Activated CD8-positive, alpha-beta T cell treated with anti-CD3 and anti-CD28 coated beads, Interleukin-2, amount 10 ng/mL, durations not matched to agents 7 days and 5 days (primary cell): ENCODE measurements at regions of chr3 and their contacts with region 1.

Region 1: DNA sequence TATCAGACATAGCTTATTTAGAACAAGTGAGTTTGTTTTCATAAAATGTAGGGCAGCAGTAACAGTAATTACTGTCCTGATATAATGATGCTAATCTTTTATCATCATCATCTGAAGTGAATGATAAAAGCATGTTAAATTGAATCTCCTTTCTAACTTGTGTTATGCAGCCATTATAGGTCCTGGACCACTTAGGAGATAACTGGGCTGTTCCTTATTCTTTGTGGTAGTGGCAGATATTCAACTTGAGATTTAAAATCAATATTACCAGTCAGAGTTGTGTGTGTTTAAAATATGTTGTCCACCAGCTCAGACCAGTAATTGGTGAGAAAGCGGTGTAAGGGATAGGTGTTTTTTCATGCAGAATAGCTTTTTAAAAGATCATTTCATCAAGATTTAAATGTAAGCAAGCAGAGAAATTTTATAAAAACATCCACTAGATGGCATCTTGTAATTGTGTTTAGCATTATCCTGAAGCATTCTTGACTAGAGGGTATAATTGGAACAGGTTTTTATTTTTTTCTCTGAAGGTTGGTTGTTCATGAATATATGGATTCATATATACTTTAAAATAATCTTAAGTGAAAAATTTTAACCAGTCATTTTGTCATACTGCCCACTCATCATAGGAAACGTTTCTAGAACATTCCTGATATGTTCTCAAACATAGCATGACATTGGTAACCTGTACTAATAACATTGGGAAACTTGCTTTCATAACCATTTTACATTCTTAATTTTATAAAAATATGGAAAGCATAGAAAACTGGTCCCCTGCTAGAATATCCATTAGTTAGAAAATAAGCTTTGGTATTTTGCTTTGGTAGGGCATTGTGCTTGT is 153.9 kb downstream of the BBX start:
- DNase-seq: no peak
- ATAC-seq: no peak
- H3K4me3 Mint-ChIP-seq: no peak overlapping the region
- H3K27ac Mint-ChIP-seq: no peak overlapping the region
- H3K4me1 Mint-ChIP-seq: peaks cover 4% of the 10 kb centered on the region
- H3K27me3 Mint-ChIP-seq: no peaks in the 10 kb centered on the region

Region 2: GRCh38 chr3:107574650-107575049 is 102.0 kb before region 1 on chr3:
- CTCF ChIA-PET with region 1: interaction called, 24 read pairs
- POLR2A ChIA-PET with region 1: no interaction called
- DNase-seq: no peak
- ATAC-seq: no peak
- H3K4me3 Mint-ChIP-seq: no peak overlapping the region
- H3K27ac Mint-ChIP-seq: no peak overlapping the region
- H3K4me1 Mint-ChIP-seq: peaks cover 6% of the 10 kb centered on the region
- H3K27me3 Mint-ChIP-seq: no peaks in the 10 kb centered on the region

Region 3: GRCh38 chr3:107660306-107660976 is 16.2 kb before region 1 on chr3:
- CTCF ChIA-PET with region 1: interaction called, 68 read pairs
- POLR2A ChIA-PET with region 1: no interaction called
- DNase-seq: no peak
- ATAC-seq: no peak
- H3K4me3 Mint-ChIP-seq: no peak overlapping the region
- H3K27ac Mint-ChIP-seq: no peak overlapping the region
- H3K4me1 Mint-ChIP-seq: peaks cover 11% of the 10 kb centered on the region
- H3K27me3 Mint-ChIP-seq: no peaks in the 10 kb centered on the region

Region 4: DNA sequence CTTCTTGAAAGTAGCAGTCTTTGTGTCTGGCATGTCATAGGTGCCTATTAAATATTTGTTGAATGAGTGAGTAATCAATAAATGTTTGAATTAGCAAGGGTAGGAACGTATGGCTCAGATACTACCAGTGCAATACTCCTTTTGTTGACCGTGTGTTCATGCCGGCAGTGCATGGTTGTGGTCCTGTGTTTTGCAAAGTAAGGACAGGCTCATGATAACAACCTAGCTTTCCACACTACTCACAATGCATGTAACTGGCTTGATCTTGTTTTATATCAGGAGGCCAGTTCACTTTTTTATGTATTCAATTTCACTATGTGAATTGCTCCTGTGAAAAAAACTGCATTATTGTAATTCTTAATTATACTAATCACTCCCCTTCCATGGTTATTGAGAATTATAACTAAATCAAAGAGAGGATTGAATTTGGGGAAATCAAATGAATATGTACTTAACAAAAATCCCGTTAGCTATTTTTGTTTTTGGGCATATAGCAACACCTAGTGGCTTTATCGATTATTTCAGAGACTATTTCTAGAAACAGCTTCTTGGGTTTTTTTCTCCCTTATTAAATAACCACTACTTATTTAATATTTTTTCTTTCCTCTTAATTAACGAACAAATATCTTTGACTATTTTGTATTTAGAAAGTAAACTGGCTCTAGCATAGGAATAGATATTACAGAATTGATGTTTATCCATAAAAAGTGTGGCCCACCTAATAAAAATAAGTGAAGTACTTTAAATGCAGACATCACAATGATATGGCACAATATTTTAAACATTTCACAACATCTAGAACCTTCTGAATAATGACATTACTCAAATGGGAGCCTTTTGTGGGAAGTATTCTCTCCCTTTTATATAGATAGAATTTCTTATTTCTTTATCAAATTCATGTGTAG is 64.6 kb after region 1 on chr3:
- CTCF ChIA-PET with region 1: interaction called, 57 read pairs
- POLR2A ChIA-PET with region 1: interaction called, 3 read pairs
- DNase-seq: no peak
- ATAC-seq: no peak
- H3K4me3 Mint-ChIP-seq: no peak overlapping the region
- H3K27ac Mint-ChIP-seq: no peak overlapping the region
- H3K4me1 Mint-ChIP-seq: no peaks in the 10 kb centered on the region
- H3K27me3 Mint-ChIP-seq: no peaks in the 10 kb centered on the region

Region 5: DNA sequence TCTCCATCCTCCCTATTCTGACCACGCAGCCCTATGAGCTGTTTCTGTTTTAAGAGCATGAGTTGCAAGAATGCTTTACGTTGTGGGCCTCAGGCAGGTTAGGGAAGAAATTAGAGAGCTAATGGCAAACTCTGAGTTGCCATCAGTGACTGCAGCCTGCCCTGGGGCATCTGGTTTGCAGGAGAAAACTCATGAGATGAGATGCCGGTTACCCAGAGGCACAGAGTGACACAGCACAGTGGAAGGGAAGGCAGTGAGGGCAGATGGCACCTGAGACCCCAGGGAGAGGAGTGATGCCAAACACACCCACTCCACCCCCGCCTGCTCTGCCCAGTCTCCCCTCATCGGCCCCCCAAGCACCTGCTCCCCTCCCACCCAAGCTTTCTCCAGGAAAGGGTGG is 148.9 kb after region 1 on chr3:
- CTCF ChIA-PET with region 1: no interaction called
- POLR2A ChIA-PET with region 1: no interaction called
- DNase-seq: no peak
- ATAC-seq: no peak
- H3K4me3 Mint-ChIP-seq: no peak overlapping the region
- H3K27ac Mint-ChIP-seq: no peak overlapping the region
- H3K4me1 Mint-ChIP-seq: no peaks in the 10 kb centered on the region
- H3K27me3 Mint-ChIP-seq: peaks cover 6% of the 10 kb centered on the region

Region 6: DNA sequence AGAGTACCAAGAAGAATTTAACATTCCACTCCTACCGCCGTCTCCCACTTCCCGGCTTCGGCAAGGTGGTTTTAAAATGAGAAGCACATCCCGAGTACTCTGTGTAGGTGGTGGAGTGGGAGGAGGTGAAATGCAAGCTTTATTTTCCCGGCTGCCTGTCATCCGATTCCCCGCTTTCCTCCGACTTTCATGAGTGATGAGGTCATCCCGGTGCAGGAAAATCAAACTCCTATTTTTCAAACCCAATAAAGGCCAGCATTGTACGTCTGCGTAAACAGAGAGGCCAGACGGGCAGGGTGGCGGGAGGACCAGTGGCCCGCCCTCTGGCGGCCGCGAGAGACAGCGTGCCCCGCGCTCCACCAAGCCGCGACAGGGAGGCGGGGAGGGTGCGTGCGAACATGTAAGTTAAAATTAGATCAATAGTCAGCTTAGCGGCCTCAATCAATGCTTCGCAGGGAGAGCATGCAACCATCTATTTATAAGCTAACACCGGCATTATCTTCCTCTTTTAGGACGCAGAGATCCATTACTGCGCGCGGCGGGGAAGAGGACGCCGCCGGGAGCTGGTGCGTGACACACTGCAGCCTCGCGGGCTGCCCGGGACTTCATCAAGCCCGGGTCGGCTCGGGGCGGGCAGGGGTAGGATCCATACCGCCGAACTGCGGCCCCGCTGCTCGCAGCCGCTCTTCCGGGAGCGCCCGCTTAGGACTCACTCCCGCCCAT is 250.8 kb after region 1 on chr3:
- CTCF ChIA-PET with region 1: interaction called, 23 read pairs
- POLR2A ChIA-PET with region 1: no interaction called
- DNase-seq: peak; percentile 77
- ATAC-seq: peak; percentile 99
- H3K4me3 Mint-ChIP-seq: peak overlapping the region; percentile 78
- H3K27ac Mint-ChIP-seq: no peak overlapping the region
- H3K4me1 Mint-ChIP-seq: peaks cover 13% of the 10 kb centered on the region
- H3K27me3 Mint-ChIP-seq: peaks cover 10% of the 10 kb centered on the region